ENCODE measurements at regions of chr1 and their contacts with region 1.

Region 1: GRCh38 chr1:173429471-173430402 is 47.4 kb upstream of the PRDX6 start:
- DNase-seq: peak; percentile 100
- ATAC-seq: peak; percentile 83
- H3K4me3 ChIP-seq: peak overlapping the region; percentile 47
- H3K27ac ChIP-seq: peak overlapping the region; percentile 71
- H3K4me1 ChIP-seq: peaks cover 71% of the 10 kb centered on the region
- H3K27me3 ChIP-seq: no peaks in the 10 kb centered on the region
- CTCF ChIP-seq: peak; percentile 96

Region 2: DNA sequence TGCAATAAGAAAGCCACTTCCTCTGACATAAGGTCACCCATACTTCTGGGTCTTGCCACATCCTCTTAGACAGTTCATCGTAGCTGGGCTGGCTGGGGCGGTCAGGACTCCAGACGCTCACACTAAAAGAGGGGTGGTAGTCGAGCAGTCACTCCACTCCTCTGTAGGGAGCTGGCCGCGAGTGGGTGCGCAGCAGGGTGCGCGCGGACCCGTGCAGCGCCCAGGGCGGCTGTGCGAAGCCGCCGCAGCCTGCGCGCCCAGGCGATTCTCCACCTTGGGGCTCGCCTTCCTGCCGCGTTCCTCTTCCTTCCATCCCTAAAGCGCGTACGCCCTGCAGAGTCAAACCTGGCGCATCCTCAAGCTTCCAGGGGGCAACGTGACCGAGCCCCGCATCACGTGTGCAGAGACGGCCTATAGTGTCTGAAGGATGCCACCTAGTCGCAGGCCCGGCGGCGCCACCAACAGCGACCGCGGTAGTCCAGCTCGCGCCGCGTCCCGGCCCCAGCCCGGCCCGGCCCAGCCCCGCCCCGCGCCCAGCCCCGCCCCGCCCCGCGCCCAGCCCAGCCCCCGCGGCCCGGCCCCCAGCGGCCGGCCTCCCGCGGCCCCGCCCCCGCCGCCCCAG is 47.0 kb after region 1 on chr1:
- CTCF ChIA-PET with region 1: interaction called, 13 read pairs
- POLR2A ChIA-PET with region 1: interaction called, 16 read pairs
- intact Hi-C with region 1: loop called (anchors 1 kb)
- DNase-seq: peak; percentile 100
- ATAC-seq: peak; percentile 77
- H3K4me3 ChIP-seq: peak overlapping the region; percentile 74
- H3K27ac ChIP-seq: peak overlapping the region; percentile 68
- H3K4me1 ChIP-seq: peaks cover 60% of the 10 kb centered on the region
- H3K27me3 ChIP-seq: no peaks in the 10 kb centered on the region
- CTCF ChIP-seq: no peak; the same call in 1 of the 2 replicates

Region 3: GRCh38 chr1:173590557-173590956 is 160.8 kb after region 1 on chr1:
- CTCF ChIA-PET with region 1: no interaction called
- POLR2A ChIA-PET with region 1: no interaction called
- intact Hi-C with region 1: loop called (anchors 1 kb)
- DNase-seq: peak; percentile 97
- ATAC-seq: peak; percentile 100
- H3K4me3 ChIP-seq: no peak overlapping the region
- H3K27ac ChIP-seq: peak overlapping the region; percentile 42
- H3K4me1 ChIP-seq: peaks cover 12% of the 10 kb centered on the region
- H3K27me3 ChIP-seq: no peaks in the 10 kb centered on the region
- CTCF ChIP-seq: no peak

Region 4: DNA sequence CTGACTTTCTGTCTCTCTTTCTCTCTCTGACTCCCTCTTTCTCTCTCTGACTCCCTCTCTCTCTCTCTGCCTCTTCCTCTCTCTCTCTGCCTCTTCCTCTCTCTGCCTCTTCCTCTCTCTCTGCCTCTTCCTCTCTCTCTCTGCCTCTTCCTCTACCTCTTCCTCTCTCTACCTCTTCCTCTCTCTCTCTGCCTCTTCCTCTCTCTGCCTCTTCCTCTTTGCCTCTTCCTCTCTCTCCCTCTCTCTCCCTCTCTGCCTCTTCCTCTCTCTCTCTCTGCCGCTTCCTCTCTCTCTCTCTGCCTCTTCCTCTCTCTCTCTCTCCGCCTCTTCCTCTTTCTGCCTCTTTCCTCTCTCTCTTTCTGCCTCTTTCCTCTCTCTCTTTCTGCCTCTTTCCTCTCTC is 258.6 kb after region 1 on chr1:
- CTCF ChIA-PET with region 1: interaction called, 5 read pairs
- POLR2A ChIA-PET with region 1: interaction called, 3 read pairs
- intact Hi-C with region 1: loop called (anchors 1 kb)
- DNase-seq: no peak
- ATAC-seq: no peak
- H3K4me3 ChIP-seq: no peak overlapping the region
- H3K27ac ChIP-seq: no peak overlapping the region
- H3K4me1 ChIP-seq: peaks cover 12% of the 10 kb centered on the region; the same call in 1 of the 2 replicates
- H3K27me3 ChIP-seq: no peaks in the 10 kb centered on the region
- CTCF ChIP-seq: no peak

Region 5: GRCh38 chr1:173824331-173825081 is 394.8 kb after region 1 on chr1 and contains the starts of genes CENPL and DARS2:
- CTCF ChIA-PET with region 1: interaction called, 7 read pairs
- POLR2A ChIA-PET with region 1: interaction called, 3 read pairs
- intact Hi-C with region 1: loop called (anchors 1 kb)
- DNase-seq: peak; percentile 100
- ATAC-seq: peak; percentile 88
- H3K4me3 ChIP-seq: peak within 1 kb of the TSS; percentile 72
- H3K27ac ChIP-seq: peak within 1 kb of the TSS; percentile 81
- H3K4me1 ChIP-seq: peaks cover 56% of the 10 kb centered on the region
- H3K27me3 ChIP-seq: no peaks in the 10 kb centered on the region
- CTCF ChIP-seq: no peak
- total RNA-seq, gene CENPL: 92.8 and 108 TPM in 2 replicates
- total RNA-seq, gene DARS2: 71.8 and 77.3 TPM in 2 replicates